Activated CD4-positive, alpha-beta T cell treated with anti-CD3 and anti-CD28 coated beads, Interleukin-2, amount 10 ng/mL, durations not matched to agents 7 days and 5 days (primary cell): ENCODE measurements at regions of chr15 and their contacts with region 1.

Region 1: DNA sequence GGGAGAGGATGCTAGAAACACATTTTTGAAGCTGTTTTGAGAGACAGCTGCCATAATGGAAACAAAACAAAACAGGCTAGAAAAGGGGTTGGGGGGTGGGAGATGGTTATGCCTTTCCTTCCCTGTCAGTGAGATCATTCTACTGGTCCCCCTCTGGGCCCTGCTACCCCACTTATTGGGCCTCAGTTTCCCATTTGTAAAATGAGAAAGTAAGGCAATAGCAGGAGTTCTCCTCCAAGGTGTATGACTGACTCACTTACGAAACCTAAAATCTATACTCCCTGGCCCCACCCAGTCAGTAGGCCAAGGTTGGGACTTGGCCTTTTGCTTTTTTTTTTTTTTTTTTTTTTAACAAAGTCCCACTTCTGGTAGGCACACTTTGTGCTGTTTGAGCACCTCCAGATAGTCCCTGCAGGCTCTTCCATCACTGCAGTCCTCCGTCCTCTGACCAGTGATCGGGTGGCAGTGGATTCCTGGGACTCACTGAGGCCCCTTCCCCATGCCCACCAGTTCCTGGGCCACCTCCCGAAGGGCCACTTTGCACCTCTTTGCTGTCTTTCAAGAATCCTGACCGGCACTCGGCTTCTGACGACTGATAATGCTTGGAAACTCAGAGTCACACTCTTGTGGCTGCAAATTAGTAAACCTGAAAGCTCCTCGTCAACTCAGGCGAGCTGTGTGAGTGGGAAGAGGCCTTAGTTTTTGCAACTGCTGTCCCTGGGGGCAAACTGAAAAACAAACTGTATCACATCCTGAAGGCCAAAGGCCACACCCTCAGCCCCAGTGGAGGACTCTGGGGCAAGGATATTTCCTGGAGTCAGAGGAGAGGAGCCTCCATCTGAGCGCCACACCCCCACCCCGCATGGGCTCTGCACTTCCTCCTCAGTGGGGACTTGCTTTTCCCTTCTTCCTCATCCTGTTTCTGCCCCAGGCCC is 6.7 kb upstream of the PSTPIP1 start:
- DNase-seq: peak; percentile 65
- H3K4me3 Mint-ChIP-seq: peak overlapping the region; percentile 41
- H3K27ac Mint-ChIP-seq: peak overlapping the region; percentile 91
- H3K4me1 Mint-ChIP-seq: peaks cover 69% of the 10 kb centered on the region
- H3K27me3 Mint-ChIP-seq: no peaks in the 10 kb centered on the region

Region 2: GRCh38 chr15:77002954-77003912 is 15.0 kb after region 1 on chr15:
- CTCF ChIA-PET with region 1: interaction called, 24 read pairs
- POLR2A ChIA-PET with region 1: interaction called, 3 read pairs
- DNase-seq: peak; percentile 83
- H3K4me3 Mint-ChIP-seq: peak overlapping the region; percentile 75
- H3K27ac Mint-ChIP-seq: peak overlapping the region; percentile 92
- H3K4me1 Mint-ChIP-seq: peaks cover 86% of the 10 kb centered on the region
- H3K27me3 Mint-ChIP-seq: no peaks in the 10 kb centered on the region

Region 3: GRCh38 chr15:77144492-77145070 is 156.4 kb after region 1 on chr15:
- CTCF ChIA-PET with region 1: no interaction called
- POLR2A ChIA-PET with region 1: no interaction called
- DNase-seq: no peak
- H3K4me3 Mint-ChIP-seq: no peak overlapping the region
- H3K27ac Mint-ChIP-seq: no peak overlapping the region
- H3K4me1 Mint-ChIP-seq: no peaks in the 10 kb centered on the region
- H3K27me3 Mint-ChIP-seq: no peaks in the 10 kb centered on the region